Calu3 (cell line): ENCODE measurements at regions of chr10 and their contacts with region 1.

Region 1: GRCh38 chr10:47311932-47312662 is 10.2 kb upstream of the GDF2 start:
- DNase-seq: peak; percentile 92
- H3K4me3 Mint-ChIP-seq: no peak overlapping the region
- H3K27ac Mint-ChIP-seq: no peak overlapping the region
- H3K4me1 Mint-ChIP-seq: no peaks in the 10 kb centered on the region
- H3K27me3 Mint-ChIP-seq: peaks cover 47% of the 10 kb centered on the region
- CTCF ChIP-seq: peak; percentile 84

Region 2: DNA sequence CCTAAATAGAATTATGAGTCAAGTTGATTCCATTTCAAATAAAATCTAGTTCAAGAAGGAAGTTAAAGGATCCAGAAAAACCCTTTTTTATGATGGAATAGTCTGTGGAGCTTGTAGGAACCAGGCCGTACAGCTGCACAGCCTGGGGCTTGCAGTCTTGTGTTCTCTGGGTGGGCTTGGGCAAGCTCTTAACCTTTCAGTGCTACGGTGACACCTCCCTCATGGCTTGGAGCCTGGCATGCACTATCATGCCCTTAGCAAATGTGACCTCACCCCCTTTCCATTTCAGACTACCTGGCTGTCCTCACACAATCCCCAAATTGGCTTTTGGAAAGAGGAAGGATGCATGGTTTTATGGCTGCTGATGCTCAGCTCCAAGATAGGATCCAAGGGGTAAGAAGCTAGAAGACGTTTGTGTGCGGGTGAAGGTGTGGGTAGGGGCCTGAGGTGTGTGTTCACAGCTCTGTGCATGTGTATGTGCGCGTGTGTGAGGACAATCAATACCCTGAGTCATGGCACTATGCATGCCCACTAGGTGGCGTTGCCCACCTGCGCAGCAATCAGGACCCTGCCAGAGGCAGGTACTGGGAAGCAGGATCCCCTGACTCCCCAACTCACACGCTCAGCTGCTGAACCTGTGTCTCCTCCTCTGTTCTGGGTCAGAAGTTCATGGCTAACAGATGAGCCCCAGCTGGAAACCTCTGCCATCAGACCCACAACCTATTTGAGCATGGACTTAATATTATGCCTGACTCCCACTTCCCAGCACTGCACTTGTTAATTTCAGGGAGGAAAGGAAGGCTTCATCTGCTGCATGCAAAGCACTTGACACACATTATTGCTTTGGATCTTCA is 287.5 kb before region 1 on chr10:
- CTCF ChIA-PET with region 1: interaction called, 28 read pairs
- intact Hi-C with region 1: loop called (anchors 1 kb)
- DNase-seq: peak; percentile 85
- H3K4me3 Mint-ChIP-seq: no peak overlapping the region
- H3K27ac Mint-ChIP-seq: no peak overlapping the region
- H3K4me1 Mint-ChIP-seq: no peaks in the 10 kb centered on the region
- H3K27me3 Mint-ChIP-seq: peaks cover 17% of the 10 kb centered on the region
- CTCF ChIP-seq: peak; percentile 87

Region 3: GRCh38 chr10:47354162-47354561 is 42.1 kb after region 1 on chr10:
- CTCF ChIA-PET with region 1: no interaction called
- intact Hi-C with region 1: no loop called
- DNase-seq: peak; percentile 24
- H3K4me3 Mint-ChIP-seq: no peak overlapping the region
- H3K27ac Mint-ChIP-seq: no peak overlapping the region
- H3K4me1 Mint-ChIP-seq: no peaks in the 10 kb centered on the region
- H3K27me3 Mint-ChIP-seq: no peaks in the 10 kb centered on the region
- CTCF ChIP-seq: no peak